ENCODE measurements at regions of chr9 and their contacts with region 1.

Region 1: GRCh38 chr9:2857564-2858198 is 13.8 kb upstream of the PUM3 start:
- DNase-seq: peak; percentile 67
- H3K4me3 ChIP-seq: no peak overlapping the region
- H3K27ac ChIP-seq: no peak overlapping the region
- H3K4me1 ChIP-seq: no peaks in the 10 kb centered on the region
- H3K27me3 ChIP-seq: peaks cover 5 to 14% of the 10 kb centered on the region in 2 experiments
- CTCF ChIP-seq: peak; percentile 75 to 76
- POLR2A ChIP-seq: no peak

Region 2: DNA sequence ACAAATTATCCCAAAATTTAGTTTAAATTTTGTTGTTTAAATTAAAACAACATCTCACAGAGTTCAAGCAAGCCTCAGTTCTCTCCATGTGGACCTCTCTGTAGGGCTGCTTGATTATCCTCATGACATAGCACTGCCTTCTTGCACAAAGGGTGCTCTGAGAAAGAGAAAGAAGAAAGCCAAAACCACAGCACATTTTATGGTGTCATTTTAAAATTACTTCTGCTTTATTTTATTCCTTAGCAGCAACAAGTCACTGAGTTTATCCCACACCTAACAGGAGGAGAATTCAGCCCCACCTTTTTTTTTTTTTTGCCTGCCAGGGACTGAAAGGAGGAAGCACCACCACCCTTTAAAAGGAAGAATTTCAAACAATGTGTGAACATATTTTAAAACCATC is 153.2 kb before region 1 on chr9:
- CTCF ChIA-PET with region 1: no interaction called
- POLR2A ChIA-PET with region 1: no interaction called
- dilution Hi-C with region 1: no loop called
- intact Hi-C with region 1: no loop called
- DNase-seq: no peak
- H3K4me3 ChIP-seq: no peak overlapping the region
- H3K27ac ChIP-seq: no peak overlapping the region
- H3K4me1 ChIP-seq: no peaks in the 10 kb centered on the region
- H3K27me3 ChIP-seq: no peaks in the 10 kb centered on the region
- CTCF ChIP-seq: no peak
- POLR2A ChIP-seq: no peak

Region 3: DNA sequence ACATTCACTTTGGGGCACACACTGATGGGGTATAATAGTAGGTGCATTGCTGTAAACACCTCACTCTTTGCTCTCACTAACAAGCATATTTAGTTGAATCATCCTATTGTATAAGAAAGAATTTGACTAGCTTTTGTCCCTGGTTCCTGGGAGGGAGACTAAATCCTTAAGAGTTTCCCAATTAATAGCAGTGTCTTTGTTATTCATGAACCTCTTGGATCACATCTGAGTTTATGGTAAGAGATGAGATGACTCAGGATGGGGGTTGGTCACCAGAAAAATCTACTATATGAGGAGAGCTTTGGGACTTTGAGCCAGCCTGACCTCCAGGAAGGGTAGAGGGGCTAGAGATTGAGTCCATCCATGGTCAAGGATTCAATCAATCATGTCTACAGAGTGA is 70.6 kb before region 1 on chr9:
- CTCF ChIA-PET with region 1: no interaction called
- POLR2A ChIA-PET with region 1: no interaction called
- dilution Hi-C with region 1: no loop called
- intact Hi-C with region 1: no loop called
- DNase-seq: no peak
- H3K4me3 ChIP-seq: no peak overlapping the region
- H3K27ac ChIP-seq: no peak overlapping the region
- H3K4me1 ChIP-seq: no peaks in the 10 kb centered on the region
- H3K27me3 ChIP-seq: no peaks in the 10 kb centered on the region
- CTCF ChIP-seq: no peak
- POLR2A ChIP-seq: no peak

Region 4: GRCh38 chr9:2872257-2872935 is 14.7 kb after region 1 on chr9:
- CTCF ChIA-PET with region 1: interaction called, 20 read pairs
- POLR2A ChIA-PET with region 1: interaction called, 3 read pairs
- dilution Hi-C with region 1: no loop called
- intact Hi-C with region 1: no loop called
- DNase-seq: no peak
- H3K4me3 ChIP-seq: no peak overlapping the region
- H3K27ac ChIP-seq: no peak overlapping the region
- H3K4me1 ChIP-seq: no peaks in the 10 kb centered on the region
- H3K27me3 ChIP-seq: peaks cover 16 to 20% of the 10 kb centered on the region in 2 experiments
- CTCF ChIP-seq: no peak
- POLR2A ChIP-seq: no peak

Region 5: DNA sequence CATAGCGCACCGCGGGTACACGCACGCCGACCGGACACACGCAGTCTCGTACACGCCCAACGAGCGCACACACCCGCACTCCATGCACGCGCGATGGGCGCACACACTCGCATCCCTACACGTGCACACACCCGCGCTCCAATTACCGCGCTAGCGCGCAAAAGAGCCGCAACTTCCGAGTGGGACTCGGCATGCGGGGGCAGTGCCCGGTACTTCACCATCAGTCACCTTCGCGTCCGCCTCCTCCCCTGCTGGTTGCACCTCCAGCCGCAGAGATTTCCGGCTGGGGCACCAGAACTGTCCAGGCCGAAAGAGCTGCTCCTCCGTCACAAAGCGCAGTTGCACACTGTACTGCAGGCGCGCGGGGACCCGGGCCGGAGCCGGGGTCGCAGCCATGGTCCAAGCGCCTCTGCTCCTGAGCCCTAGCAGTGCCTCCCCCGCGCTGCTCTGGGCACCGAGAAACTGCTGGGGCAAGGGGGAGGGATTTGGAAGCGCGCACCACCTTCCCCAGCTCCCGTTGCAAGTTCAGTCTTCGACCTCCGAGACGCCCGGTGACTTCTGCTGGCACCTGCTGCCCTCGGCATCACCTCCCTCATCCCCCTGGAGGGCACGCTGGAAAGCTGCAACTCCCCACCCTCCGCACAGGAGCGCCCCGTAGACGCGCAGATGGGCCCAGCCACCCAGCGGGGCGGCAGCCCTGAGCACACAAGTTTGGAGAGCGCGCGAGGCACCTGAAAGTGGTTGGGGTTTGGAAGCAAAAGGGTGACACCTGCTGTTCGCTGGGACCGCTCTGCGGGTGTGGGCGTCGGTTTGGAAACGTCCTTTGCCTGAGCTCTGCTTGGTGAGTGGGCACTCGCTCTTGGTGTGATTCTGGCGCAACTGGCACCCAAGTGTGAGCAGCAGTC is 323.6 kb after region 1 on chr9:
- CTCF ChIA-PET with region 1: interaction called, 15 read pairs
- POLR2A ChIA-PET with region 1: no interaction called
- dilution Hi-C with region 1: no loop called
- intact Hi-C with region 1: loop called (anchors 1 kb)
- DNase-seq: no peak
- H3K4me3 ChIP-seq: no peak overlapping the region
- H3K27ac ChIP-seq: no peak overlapping the region
- H3K4me1 ChIP-seq: no peaks in the 10 kb centered on the region
- H3K27me3 ChIP-seq: peaks cover 29 to 33% of the 10 kb centered on the region in 2 experiments
- CTCF ChIP-seq: no peak
- POLR2A ChIP-seq: no peak

Region 6: DNA sequence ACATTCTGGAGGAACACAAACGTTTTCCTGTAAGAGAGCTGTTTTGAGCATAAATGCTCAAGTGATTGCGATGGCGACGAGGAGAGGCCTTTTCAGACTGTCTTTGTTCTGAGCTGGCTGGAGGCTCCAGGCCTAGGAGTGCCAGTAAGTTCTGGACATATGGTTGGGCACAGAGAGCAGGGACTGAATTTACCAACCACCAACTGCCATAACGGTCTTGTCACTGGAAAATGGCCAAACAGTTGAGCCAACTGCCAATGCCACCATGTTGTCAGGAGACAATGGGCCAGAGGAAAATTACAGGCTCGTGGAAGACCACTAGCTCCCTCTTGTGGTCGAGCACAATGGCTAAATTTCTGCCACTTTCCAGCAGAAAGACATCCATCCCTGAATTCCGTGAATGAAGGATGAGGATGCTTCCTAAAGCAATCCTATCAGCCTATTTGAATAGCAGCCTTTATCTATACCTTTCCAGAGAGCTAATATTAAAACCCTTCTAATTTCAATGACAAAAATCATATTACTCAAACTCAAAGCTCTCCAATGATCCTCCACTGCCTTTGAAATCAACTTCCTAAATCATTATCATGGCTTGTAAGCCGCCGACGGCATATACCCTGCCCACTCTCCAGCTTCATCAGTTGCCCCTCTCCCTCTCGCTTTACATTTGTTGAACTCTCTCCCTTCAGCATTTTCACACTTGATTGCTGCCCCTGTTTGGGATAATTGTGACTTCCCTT is 1509.1 kb after region 1 on chr9:
- CTCF ChIA-PET with region 1: interaction called, 11 read pairs
- POLR2A ChIA-PET with region 1: no interaction called
- dilution Hi-C with region 1: no loop called
- intact Hi-C with region 1: loop called (anchors 1 kb)
- DNase-seq: peak; percentile 53
- H3K4me3 ChIP-seq: no peak overlapping the region
- H3K27ac ChIP-seq: no peak overlapping the region
- H3K4me1 ChIP-seq: no peaks in the 10 kb centered on the region
- H3K27me3 ChIP-seq: peaks cover 2 to 5% of the 10 kb centered on the region in 2 experiments
- CTCF ChIP-seq: peak; percentile 74 to 81
- POLR2A ChIP-seq: no peak

Measured in endothelial cell of umbilical vein (primary cell).